ENCODE measurements at regions of chr17 and their contacts with region 1.

Region 1: DNA sequence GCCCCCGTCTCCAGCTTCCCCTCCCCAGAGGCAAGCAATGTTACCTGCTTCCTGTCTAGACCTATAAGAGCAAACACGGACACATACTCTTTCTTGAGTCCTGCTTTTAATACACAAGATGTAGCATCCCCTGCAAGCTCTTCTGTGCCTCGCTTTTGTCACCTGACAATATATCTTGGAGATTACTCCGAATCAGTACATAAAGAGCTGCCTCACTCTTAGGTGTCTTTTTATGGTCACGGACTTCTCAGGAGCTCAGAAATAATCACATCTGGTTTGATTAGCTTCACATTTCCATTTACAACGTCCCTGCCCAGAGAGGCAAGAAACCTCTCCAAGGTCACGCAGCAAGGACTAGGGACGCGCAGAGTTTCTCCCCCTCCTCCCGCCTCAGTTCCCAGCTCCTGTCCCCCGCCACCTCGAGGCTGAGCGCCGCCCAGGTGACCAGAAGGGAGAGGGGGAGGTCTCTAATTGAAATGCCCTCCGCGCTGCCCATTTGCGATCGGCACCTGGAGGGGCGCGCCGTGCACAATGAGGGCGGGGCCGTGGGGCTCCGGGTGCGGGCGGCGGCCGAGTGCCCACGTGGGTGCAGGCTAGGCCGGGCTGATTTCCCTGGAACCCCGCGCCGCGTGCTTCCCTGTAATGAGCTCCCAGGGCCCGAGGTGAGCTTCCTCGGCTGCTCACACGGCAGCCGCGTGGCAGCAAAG is 13.8 kb upstream of the SEZ6 start:
- DNase-seq: no peak
- CTCF ChIP-seq: no peak

Region 2: DNA sequence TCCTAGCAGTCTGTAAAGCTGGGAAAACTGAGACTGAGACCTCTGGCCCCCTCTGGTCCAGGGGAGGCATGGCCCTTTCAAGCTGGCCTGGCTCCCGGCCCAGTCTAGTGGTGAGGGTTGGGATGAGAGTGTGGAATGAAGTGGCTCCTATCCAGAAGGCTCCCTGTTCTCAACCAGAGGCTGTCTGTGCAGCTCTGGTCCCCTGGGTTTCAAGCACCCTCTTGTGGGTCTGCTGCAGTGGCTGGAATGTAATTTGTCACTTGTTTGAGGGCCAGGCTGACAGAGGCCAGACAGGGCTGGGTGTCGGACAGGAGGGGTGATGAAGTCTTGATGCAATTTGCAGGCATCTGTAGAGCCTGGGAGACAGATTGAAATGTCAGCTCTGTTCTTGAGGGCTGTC is 46.2 kb before region 1 on chr17:
- in situ Hi-C with region 1: loop called (anchors 10 kb)
- DNase-seq: no peak
- CTCF ChIP-seq: no peak